Heart right ventricle (tissue), 16 donors: ENCODE measurements at regions of chr11 and their contacts with region 1.

Region 1: GRCh38 chr11:28169816-28170215 is 61.6 kb downstream of the METTL15 start:
- DNase-seq: no peak
- ATAC-seq: no peak
- H3K4me3 ChIP-seq: no peak overlapping the region
- H3K27ac ChIP-seq: no peak overlapping the region
- H3K4me1 ChIP-seq: no peaks in the 10 kb centered on the region
- H3K27me3 ChIP-seq: no peaks in the 10 kb centered on the region
- CTCF ChIP-seq: no peak

Region 2: DNA sequence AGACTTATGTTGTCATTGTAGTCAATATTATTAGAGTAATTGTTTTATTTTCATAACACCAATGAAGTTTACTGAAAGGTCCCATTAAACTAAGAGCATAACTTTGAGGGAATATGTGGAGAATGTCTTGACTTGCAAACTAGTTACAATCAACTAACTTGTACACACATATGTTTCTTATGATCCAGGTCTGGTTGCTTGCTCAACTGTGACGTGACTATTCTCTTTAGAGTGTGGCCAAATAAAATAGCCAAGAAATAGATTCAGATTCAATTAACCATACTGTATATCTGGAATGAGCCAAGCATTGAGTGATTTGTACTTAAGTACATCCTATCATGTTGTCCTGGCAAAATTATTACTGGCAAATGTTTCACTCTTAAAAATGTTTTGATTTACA is 40.1 kb after region 1 on chr11:
- intact Hi-C with region 1: no loop called
- DNase-seq: no peak
- ATAC-seq: no peak
- H3K4me3 ChIP-seq: no peak overlapping the region
- H3K27ac ChIP-seq: no peak overlapping the region
- H3K4me1 ChIP-seq: no peaks in the 10 kb centered on the region
- H3K27me3 ChIP-seq: no peaks in the 10 kb centered on the region
- CTCF ChIP-seq: no peak

Region 3: DNA sequence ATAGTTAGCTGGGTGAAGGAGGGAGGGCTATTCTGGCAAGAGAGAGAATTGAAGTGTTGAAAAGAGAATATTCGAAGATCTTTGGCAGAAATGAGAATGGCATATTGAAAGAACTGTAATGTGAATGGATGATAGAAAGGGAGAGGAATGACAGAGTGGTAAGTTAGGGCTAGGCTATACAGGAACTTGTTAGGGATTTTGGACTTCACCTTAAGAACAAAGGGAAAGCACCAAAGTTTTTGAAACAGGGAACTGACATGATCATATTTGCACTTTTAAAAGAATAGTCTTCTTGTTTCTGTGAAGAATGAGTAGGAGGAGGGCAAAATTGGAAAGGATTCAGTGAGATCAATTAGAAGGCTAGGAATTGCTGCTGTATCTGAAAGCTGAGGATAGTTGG is 57.6 kb after region 1 on chr11:
- intact Hi-C with region 1: loop called in 1 of 10 experiments (anchors 2 kb)
- DNase-seq: no peak
- ATAC-seq: no peak
- H3K4me3 ChIP-seq: no peak overlapping the region
- H3K27ac ChIP-seq: no peak overlapping the region
- H3K4me1 ChIP-seq: peaks cover 0 to 4% (median 0%) of the 10 kb centered on the region in 9 donors
- H3K27me3 ChIP-seq: no peaks in the 10 kb centered on the region
- CTCF ChIP-seq: no peak